OCI-LY7 (cell line): ENCODE measurements at regions of chr2 and their contacts with region 1.

Region 1: GRCh38 chr2:138522556-138522955 is 21.0 kb downstream of the SPOPL start:
- DNase-seq: no peak
- H3K4me3 ChIP-seq: no peak overlapping the region
- H3K27ac ChIP-seq: no peak overlapping the region
- H3K4me1 ChIP-seq: peaks cover 12% of the 10 kb centered on the region
- CTCF ChIP-seq: no peak

Region 2: DNA sequence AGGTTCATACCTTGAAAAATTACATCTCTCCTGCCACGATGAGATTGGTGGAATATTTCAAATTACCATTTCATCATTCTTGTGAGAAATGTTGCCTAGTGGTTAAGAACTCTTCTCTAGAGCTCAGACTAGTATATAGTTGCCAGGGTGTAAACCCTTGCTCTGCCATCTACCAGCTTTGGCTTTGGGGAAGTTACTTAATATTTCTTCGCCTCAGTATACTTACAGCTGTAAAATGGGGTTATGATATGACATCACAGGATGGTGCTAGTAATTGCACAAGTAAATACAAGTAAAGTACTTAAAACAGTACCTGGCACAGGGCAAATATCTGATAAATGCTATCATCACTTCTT is 19.5 kb before region 1 on chr2:
- CTCF ChIA-PET with region 1: no interaction called
- POLR2A ChIA-PET with region 1: interaction called, 11 read pairs
- intact Hi-C with region 1: no loop called
- DNase-seq: peak; percentile 43
- H3K4me3 ChIP-seq: peak overlapping the region; percentile 77
- H3K27ac ChIP-seq: peak overlapping the region; percentile 89
- H3K4me1 ChIP-seq: peaks cover 31% of the 10 kb centered on the region
- CTCF ChIP-seq: no peak

Region 3: DNA sequence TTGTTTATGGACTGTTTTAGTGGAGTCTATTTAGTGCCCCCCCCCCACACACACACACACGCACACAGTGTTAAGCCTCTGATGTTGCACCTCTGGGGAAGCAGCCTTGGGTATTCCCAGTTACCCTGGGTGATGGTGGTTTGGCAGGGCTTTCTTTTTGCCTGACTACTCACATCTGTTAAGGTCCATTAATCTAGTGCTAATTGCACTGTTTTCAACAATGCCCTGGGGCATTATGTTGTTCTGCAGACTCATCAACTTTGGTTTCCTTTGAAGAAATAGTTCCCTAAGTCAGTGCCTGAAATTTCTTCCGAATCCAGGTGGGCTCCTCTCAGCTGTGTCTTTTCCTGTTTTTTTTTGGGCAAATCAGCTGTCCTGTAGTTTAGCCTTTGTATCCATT is 13.7 kb after region 1 on chr2:
- CTCF ChIA-PET with region 1: no interaction called
- POLR2A ChIA-PET with region 1: interaction called, 10 read pairs
- intact Hi-C with region 1: no loop called
- DNase-seq: no peak
- H3K4me3 ChIP-seq: no peak overlapping the region
- H3K27ac ChIP-seq: no peak overlapping the region
- H3K4me1 ChIP-seq: no peaks in the 10 kb centered on the region
- CTCF ChIP-seq: no peak

Region 4: GRCh38 chr2:138602166-138602460 is 79.6 kb after region 1 on chr2:
- CTCF ChIA-PET with region 1: no interaction called
- POLR2A ChIA-PET with region 1: no interaction called
- intact Hi-C with region 1: no loop called
- DNase-seq: no peak
- H3K4me3 ChIP-seq: no peak overlapping the region
- H3K27ac ChIP-seq: no peak overlapping the region
- H3K4me1 ChIP-seq: no peaks in the 10 kb centered on the region
- CTCF ChIP-seq: no peak